ENCODE measurements at regions of chr1 and their contacts with region 1.

Region 1: DNA sequence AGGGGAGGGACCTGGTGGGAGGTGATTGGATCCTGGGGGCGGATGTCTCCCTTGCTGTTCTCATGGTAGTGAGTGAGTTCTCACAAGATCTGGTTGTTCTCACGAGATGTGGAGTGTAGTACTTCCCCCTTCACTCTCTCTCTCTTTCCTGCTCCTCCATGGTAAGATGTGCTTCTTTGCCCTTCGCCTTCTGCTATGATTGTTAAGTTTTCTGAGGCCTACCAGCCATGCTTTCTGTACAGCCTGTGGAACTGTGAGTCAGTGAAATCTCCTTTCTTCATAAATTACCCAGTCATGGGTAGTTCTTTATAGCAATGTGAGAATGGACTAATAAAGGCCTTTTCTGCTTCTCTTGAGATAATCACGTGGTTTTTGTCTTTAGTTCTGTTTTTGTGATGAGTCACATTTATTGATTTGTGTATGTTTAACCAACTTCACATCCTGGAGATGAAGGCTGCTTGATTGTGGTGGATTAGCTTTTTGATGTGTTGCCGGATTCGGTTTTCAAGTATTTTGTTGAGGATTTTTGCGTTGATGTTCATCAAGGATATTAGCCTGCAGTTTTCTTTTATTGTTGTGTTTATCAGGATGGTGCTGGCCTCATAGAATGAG is 45.5 kb downstream of the RABGAP1L start:
- DNase-seq: no peak
- H3K4me3 ChIP-seq: no peak overlapping the region
- H3K27ac ChIP-seq: no peak overlapping the region
- H3K4me1 ChIP-seq: no peaks in the 10 kb centered on the region
- H3K27me3 ChIP-seq: no peaks in the 10 kb centered on the region
- CTCF ChIP-seq: no peak
- EP300 ChIP-seq: no peak
- RAD21 ChIP-seq: no peak

Region 2: GRCh38 chr1:174217787-174218574 is 13.2 kb after region 1 on chr1:
- CTCF ChIA-PET with region 1: interaction called, 18 read pairs
- POLR2A ChIA-PET with region 1: no interaction called
- DNase-seq: peak; percentile 18
- H3K4me3 ChIP-seq: no peak overlapping the region; a peak in 1 of 4 replicates
- H3K27ac ChIP-seq: no peak overlapping the region
- H3K4me1 ChIP-seq: no peaks in the 10 kb centered on the region; a peak in 1 of 4 replicates
- H3K27me3 ChIP-seq: no peaks in the 10 kb centered on the region
- CTCF ChIP-seq: peak; percentile 87
- EP300 ChIP-seq: no peak
- RAD21 ChIP-seq: peak; percentile 82

Measured in SK-N-SH (cell line).